Mammary epithelial cell (primary cell): ENCODE measurements at regions of chr12 and their contacts with region 1.

Region 1: GRCh38 chr12:75334384-75335030 is at the start of gene GLIPR1L1:
- DNase-seq: peak; percentile 75
- H3K4me3 ChIP-seq: peak within 1 kb of the TSS; percentile 30 to 62 (median 54)
- H3K27ac ChIP-seq: no peak within 1 kb of the TSS
- H3K4me1 ChIP-seq: peaks cover 5% of the 10 kb centered on the region
- H3K27me3 ChIP-seq: no peaks in the 10 kb centered on the region
- CTCF ChIP-seq: peak; percentile 76 to 87
- total RNA-seq, gene GLIPR1L1: not detected

Region 2: DNA sequence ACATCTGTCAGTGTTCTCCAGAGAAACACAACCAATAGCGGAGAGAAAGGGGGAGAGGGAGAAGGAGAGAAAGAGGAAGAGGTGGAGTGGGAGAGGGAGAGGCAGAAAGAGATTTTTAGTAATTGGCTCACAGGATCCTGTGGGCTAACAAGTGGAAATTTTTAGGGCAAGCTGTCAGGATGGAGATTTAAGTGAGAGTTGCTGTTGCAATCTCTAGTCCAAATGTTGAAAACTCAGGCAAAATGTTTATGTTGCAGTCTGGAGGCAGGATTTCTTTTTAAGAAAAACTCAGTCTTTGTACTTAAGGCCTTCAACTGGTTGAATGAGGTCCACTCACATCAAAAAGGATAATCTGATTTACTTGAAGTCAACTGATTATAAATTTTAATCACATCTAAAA is 43.8 kb after region 1 on chr12:
- CTCF ChIA-PET with region 1: no interaction called
- dilution Hi-C with region 1: no loop called
- in situ Hi-C with region 1: no loop called
- intact Hi-C with region 1: loop called (anchors 2 kb)
- DNase-seq: no peak
- H3K4me3 ChIP-seq: no peak overlapping the region
- H3K27ac ChIP-seq: no peak overlapping the region
- H3K4me1 ChIP-seq: peaks cover 8% of the 10 kb centered on the region
- H3K27me3 ChIP-seq: no peaks in the 10 kb centered on the region
- CTCF ChIP-seq: no peak

Region 3: GRCh38 chr12:75390899-75391538 is 56.5 kb after region 1 on chr12 and contains the start of gene GLIPR1L2:
- CTCF ChIA-PET with region 1: no interaction called
- dilution Hi-C with region 1: no loop called
- in situ Hi-C with region 1: no loop called
- intact Hi-C with region 1: loop called (anchors 1 kb)
- DNase-seq: peak; percentile 98
- H3K4me3 ChIP-seq: peak within 1 kb of the TSS; percentile 50 to 80 (median 54)
- H3K27ac ChIP-seq: peak within 1 kb of the TSS; percentile 80
- H3K4me1 ChIP-seq: peaks cover 20% of the 10 kb centered on the region
- H3K27me3 ChIP-seq: no peaks in the 10 kb centered on the region
- CTCF ChIP-seq: peak; percentile 76 to 95
- total RNA-seq, gene GLIPR1L2: 0.80 to 1.2 TPM

Region 4: GRCh38 chr12:75437564-75437963 is 103.1 kb after region 1 on chr12:
- CTCF ChIA-PET with region 1: no interaction called
- dilution Hi-C with region 1: no loop called
- in situ Hi-C with region 1: no loop called
- intact Hi-C with region 1: loop called (anchors 2 kb)
- DNase-seq: peak; percentile 53
- H3K4me3 ChIP-seq: no peak overlapping the region
- H3K27ac ChIP-seq: no peak overlapping the region
- H3K4me1 ChIP-seq: peaks cover 19% of the 10 kb centered on the region
- H3K27me3 ChIP-seq: no peaks in the 10 kb centered on the region
- CTCF ChIP-seq: peak; percentile 30 to 52

Region 5: GRCh38 chr12:75480469-75480949 is 146.0 kb after region 1 on chr12 and contains the start of gene GLIPR1:
- CTCF ChIA-PET with region 1: no interaction called
- dilution Hi-C with region 1: no loop called
- in situ Hi-C with region 1: loop called (anchors 5 to 10 kb)
- intact Hi-C with region 1: loop called (anchors 1 kb)
- DNase-seq: peak; percentile 95
- H3K4me3 ChIP-seq: peak within 1 kb of the TSS; percentile 49 to 71 (median 67)
- H3K27ac ChIP-seq: peak within 1 kb of the TSS; percentile 85
- H3K4me1 ChIP-seq: peaks cover 41% of the 10 kb centered on the region
- H3K27me3 ChIP-seq: no peaks in the 10 kb centered on the region
- CTCF ChIP-seq: no peak
- total RNA-seq, gene GLIPR1: 92.4 to 96.0 TPM

Region 6: DNA sequence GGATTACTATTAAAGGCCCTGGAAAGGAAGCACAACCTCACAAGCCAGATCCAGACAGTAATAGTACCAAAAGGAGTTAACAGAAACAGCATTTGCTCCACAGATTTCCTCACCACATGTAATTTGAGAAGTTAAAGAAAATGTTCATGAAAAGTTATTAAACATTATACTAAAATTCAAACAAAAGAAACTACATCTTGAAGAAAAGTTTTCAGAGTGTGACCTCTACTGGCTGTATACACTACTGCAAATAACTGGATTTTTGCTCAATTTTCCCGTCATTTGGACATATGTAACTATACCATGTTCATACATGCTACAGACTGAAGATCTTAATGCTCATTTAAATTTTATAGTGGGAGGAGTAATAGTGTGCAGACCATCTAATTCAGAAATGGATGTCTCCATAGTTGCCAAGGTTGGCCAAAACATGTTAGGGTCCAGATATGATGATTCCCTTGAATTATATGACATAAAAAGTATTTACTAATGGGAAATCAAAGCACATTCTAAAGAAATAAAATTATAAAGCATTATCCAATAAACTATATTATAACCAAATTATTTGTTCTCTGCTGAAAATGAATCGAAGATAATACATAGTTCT is 171.3 kb after region 1 on chr12:
- CTCF ChIA-PET with region 1: no interaction called
- dilution Hi-C with region 1: no loop called
- in situ Hi-C with region 1: no loop called
- intact Hi-C with region 1: loop called (anchors 1 kb)
- DNase-seq: no peak
- H3K4me3 ChIP-seq: no peak overlapping the region
- H3K27ac ChIP-seq: no peak overlapping the region
- H3K4me1 ChIP-seq: peaks cover 13% of the 10 kb centered on the region
- H3K27me3 ChIP-seq: no peaks in the 10 kb centered on the region
- CTCF ChIP-seq: peak; percentile 56 to 88